ENCODE measurements at regions of chr3 and their contacts with region 1.

Region 1: GRCh38 chr3:9067352-9067975 is 104.2 kb upstream of the RAD18 start:
- DNase-seq: peak in 5 of 10 donors; percentile 42 to 81 (median 70)
- H3K4me3 ChIP-seq: peak overlapping the region in 1 of 59 donors; percentile 29
- H3K27ac ChIP-seq: peak overlapping the region in 49 of 59 donors; percentile 6 to 82 (median 60)
- H3K27me3 ChIP-seq: no peaks in the 10 kb centered on the region
- CTCF ChIP-seq: peak; percentile 69 to 96 (median 89)

Region 2: DNA sequence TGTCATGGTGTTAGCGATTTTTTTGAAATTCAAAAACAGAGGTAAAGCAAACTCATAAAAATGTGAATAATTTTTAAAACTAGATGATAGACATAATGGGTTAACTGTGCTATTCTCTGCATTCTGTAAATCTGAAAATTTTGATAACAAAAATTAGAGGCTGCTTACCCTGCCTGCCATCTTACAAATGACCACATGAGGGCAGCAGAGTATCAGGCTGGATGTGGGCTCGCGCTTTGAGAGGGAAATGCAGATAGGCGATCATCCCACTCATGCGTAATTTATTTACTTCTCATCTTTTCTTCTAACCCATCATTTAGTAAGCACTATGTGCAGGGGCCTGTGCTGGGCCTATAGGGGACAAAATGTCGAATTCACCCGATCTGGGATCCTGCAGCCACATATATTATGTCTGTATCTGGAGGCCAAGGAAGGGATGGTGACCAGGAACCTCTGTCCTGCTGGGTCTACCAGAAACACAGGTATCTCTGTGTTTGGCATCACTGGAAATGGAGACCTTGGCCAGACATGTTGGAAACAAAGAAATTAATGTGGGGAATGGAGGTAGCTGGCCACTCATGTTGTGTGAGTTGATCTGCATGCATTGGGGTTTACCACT is 96.4 kb before region 1 on chr3:
- intact Hi-C with region 1: loop called (anchors 1 to 5 kb)
- DNase-seq: peak in 8 of 10 donors; percentile 45 to 78 (median 68)
- H3K4me3 ChIP-seq: peak overlapping the region in 37 of 59 donors; percentile 1 to 51 (median 25)
- H3K27ac ChIP-seq: peak overlapping the region in 3 of 59 donors; percentile 32 to 59 (median 50)
- H3K27me3 ChIP-seq: peaks cover 0 to 7% (median 0%) of the 10 kb centered on the region in 45 donors
- CTCF ChIP-seq: peak; percentile 90 to 100 (median 99)

Region 3: GRCh38 chr3:8987645-8988383 is 79.7 kb before region 1 on chr3:
- intact Hi-C with region 1: loop called (anchors 1 to 2 kb)
- DNase-seq: peak in 9 of 10 donors; percentile 61 to 83 (median 74)
- H3K4me3 ChIP-seq: no peak overlapping the region
- H3K27ac ChIP-seq: peak overlapping the region in 13 of 59 donors; percentile 6 to 69 (median 31)
- H3K27me3 ChIP-seq: no peaks in the 10 kb centered on the region
- CTCF ChIP-seq: peak; percentile 47 to 91 (median 83)

Region 4: DNA sequence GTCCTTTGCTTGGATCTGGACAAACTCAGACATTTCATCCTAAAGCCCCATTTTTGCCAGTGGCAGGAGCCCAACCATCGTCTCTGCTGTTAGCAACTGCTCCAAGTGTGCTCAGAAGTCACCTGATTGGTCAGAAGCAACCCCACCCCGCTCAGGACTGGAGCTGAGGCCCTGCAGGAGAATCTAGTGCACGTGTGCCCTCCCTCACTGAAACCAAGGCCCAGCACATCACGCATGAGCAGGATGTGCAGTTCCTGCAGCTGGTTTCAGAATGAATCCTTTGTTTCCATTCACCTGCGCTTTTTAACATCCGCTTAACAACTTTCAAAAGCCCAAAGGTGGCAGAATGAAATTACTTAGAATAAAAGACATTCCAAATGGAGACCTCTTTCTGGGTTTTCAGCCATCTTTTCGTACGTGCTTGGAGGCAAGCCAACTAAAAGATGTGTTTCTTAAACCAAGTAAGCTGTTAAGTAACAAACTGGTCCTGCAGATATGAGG is 100.8 kb after region 1 on chr3:
- intact Hi-C with region 1: no loop called
- DNase-seq: peak in 1 of 10 donors; percentile 14
- H3K4me3 ChIP-seq: no peak overlapping the region
- H3K27ac ChIP-seq: peak overlapping the region in 4 of 59 donors; percentile 19 to 31 (median 24)
- H3K27me3 ChIP-seq: no peaks in the 10 kb centered on the region
- CTCF ChIP-seq: no peak